B cell (primary cell): ENCODE measurements at regions of chr4 and their contacts with region 1.

Region 1: DNA sequence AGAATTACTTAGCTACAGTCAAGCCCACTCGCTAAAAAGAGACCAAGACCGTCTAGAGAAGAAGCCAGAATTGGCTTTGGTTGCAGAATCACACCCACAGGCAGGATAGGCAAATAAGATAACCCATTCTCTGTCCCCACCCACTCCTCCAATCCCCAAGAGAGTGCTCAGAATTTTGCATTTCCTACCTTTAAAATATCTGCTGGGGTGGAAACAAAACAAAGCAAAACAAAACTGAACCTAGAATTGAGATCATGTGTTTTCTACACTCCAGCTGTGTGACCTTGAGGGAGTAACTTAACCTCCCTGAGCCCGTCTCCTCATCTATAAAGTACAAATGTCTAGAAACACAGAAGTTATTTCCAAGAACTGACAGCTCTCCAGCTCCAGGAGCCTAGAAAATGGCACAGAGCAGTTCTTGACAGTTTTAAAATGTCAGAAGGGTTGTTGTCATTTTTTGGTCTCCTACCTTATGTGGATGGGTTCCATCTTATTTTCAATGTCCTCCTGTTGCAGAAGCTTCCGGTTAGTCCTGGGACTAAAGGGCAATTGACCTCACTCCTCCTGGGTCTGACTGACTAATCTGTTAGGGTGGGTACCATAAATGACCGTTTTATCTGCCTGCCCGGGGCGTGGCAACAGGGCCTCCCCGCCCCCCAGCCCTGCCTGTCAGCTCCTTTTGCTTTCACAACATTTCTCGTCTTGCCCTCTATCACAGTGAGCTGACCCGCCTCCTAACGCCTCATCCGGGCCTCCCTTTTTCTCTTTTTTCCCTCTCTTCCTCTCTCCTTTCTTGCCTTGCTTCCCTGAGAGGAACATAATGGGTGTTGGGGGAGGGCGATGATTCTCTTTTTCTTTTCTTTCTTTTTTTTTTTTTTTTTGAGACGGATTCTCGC is 114.0 kb downstream of the RBM47 start:
- DNase-seq: peak; percentile 84
- ATAC-seq: peak; percentile 85
- H3K4me3 ChIP-seq: peak overlapping the region in 2 of 5 experiments; percentile 43 to 56
- H3K4me3 Mint-ChIP-seq: peak overlapping the region; percentile 82
- H3K27ac ChIP-seq: peak overlapping the region; percentile 38 to 66
- H3K27ac Mint-ChIP-seq: peak overlapping the region; percentile 61
- H3K4me1 ChIP-seq: peaks cover 25 to 36% of the 10 kb centered on the region in 2 donors
- H3K4me1 Mint-ChIP-seq: peaks cover 44% of the 10 kb centered on the region
- H3K27me3 ChIP-seq: no peaks in the 10 kb centered on the region
- H3K27me3 Mint-ChIP-seq: no peaks in the 10 kb centered on the region
- CTCF ChIP-seq: no peak

Region 2: DNA sequence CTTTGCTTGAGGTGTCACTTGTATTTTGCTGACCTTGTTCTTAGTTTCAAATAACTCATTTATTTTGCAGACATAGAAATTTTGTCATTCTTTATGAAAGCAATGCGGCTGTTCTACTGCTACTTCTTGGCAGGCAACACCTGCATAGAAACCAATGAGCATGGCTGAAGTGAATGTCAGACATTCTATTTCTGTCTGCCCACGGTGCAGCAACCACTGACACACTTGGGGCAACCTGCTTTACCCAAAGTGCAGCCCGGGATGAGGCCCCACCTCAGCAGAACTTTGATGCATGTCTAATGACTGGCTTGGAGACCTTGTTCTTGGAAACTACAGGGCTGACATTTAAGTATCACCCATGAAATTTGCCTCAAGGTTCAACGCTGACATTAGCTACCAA is 20.4 kb after region 1 on chr4:
- CTCF ChIA-PET with region 1: interaction called, 3 read pairs
- POLR2A ChIA-PET with region 1: no interaction called
- intact Hi-C with region 1: loop called (anchors 1 kb)
- DNase-seq: peak; percentile 59
- ATAC-seq: peak; percentile 77
- H3K4me3 ChIP-seq: no peak overlapping the region
- H3K4me3 Mint-ChIP-seq: peak overlapping the region; percentile 83
- H3K27ac ChIP-seq: peak overlapping the region in 1 of 2 donors; percentile 7
- H3K27ac Mint-ChIP-seq: peak overlapping the region; percentile 90
- H3K4me1 ChIP-seq: peaks cover 5 to 19% of the 10 kb centered on the region in 2 donors
- H3K4me1 Mint-ChIP-seq: peaks cover 18% of the 10 kb centered on the region
- H3K27me3 ChIP-seq: no peaks in the 10 kb centered on the region
- H3K27me3 Mint-ChIP-seq: no peaks in the 10 kb centered on the region
- CTCF ChIP-seq: no peak

Region 3: GRCh38 chr4:40576631-40577480 is 61.2 kb after region 1 on chr4:
- CTCF ChIA-PET with region 1: no interaction called
- POLR2A ChIA-PET with region 1: interaction called, 5 read pairs
- intact Hi-C with region 1: loop called (anchors 10 kb)
- DNase-seq: peak; percentile 77
- ATAC-seq: peak; percentile 75
- H3K4me3 ChIP-seq: peak overlapping the region in 3 of 5 experiments; percentile 13 to 48 (median 20)
- H3K4me3 Mint-ChIP-seq: peak overlapping the region; percentile 74
- H3K27ac ChIP-seq: peak overlapping the region; percentile 66 to 79
- H3K27ac Mint-ChIP-seq: peak overlapping the region; percentile 92
- H3K4me1 ChIP-seq: peaks cover 37 to 54% of the 10 kb centered on the region in 2 donors
- H3K4me1 Mint-ChIP-seq: peaks cover 51% of the 10 kb centered on the region
- H3K27me3 ChIP-seq: no peaks in the 10 kb centered on the region
- H3K27me3 Mint-ChIP-seq: no peaks in the 10 kb centered on the region
- CTCF ChIP-seq: no peak